Adrenal gland (tissue), 19 donors: ENCODE measurements at regions of chr6 and their contacts with region 1.

Region 1: DNA sequence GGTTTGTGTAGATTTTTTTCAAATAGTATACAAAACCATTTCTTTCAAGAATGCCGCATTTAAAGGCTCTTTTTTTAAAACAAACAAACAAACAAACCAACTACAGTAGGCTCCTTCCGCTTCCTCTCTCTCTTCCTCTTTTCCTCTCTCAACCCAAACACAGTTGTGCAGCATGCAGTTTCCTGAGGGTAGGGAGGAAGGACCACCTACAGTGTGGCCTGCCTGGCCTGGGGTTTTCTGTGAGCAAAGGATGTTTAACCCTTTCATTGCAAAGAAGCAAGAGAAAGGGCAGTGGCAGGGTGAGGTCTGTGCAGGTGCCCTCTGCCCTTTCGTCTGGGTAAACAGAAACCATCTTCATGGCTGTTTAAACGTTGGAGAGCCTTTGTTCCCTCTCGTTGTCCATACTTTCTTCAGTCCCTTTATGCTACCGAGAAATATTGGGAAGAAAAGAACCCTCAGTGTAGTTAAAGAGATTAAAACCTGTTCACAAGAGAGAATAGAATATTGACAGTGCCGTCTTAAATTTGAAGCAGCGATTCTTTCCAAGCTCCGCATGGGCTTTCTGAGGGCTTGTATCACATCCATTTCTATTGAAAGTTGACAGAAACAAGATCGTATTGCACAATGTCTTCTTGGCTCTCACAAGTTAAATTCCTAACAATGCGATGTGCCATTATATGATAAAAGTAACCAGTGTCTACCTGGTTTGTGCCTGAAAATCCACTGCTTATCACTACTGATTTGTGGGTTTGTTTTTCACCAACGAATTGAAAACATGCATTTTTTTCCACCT is 215.5 kb upstream of the SNX9 start:
- DNase-seq: no peak
- H3K4me3 ChIP-seq: no peak overlapping the region
- H3K27ac ChIP-seq: no peak overlapping the region
- H3K4me1 ChIP-seq: no peaks in the 10 kb centered on the region
- H3K27me3 ChIP-seq: no peaks in the 10 kb centered on the region
- CTCF ChIP-seq: no peak
- POLR2A ChIP-seq: no peak

Region 2: DNA sequence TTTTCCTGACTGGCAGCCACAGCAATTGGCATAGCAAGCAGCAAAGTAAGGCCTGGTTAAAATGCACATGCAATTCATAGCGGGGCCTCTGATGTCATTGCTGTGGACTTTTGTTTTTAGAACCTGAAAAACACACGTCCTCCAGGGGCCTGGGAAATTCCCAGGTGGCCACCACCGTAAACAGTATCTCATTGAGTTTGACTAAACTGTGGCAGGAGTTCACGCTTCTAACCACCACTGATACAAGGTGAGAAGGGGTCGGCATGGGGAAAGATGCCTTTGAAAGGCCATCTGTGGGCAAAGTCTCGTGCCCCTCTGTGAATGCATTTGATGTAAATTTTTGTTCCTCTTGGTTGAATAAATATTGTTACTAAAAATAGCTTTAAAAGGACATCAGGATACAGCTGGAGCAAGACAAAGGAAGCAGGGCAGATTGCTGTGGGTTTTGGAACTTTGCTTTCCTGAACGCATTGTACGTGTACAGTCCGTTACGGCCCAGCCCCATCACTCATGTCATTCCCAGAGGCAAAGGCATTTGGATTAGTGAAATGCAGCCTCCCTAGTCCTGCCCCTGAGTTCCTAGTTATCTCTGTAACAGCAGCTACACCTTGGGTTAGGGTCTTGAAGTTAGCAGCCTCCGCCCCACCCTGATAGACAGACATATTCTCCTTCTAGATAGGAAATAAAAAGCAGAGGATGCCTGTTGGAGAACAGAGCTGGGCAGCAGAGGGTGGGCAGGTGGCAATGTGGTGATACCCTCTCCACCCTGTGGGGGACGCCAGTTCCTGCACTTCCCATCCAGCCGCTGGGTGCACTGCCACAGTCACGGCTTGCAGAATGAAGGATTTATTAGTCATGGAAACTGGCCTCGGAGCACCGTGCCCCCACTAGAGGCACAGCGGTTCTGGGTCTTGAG is 146.3 kb before region 1 on chr6:
- intact Hi-C with region 1: no loop called
- DNase-seq: peak in 2 of 7 donors; percentile 12 to 30
- H3K4me3 ChIP-seq: no peak overlapping the region
- H3K27ac ChIP-seq: peak overlapping the region in 2 of 5 donors; percentile 3 to 68
- H3K4me1 ChIP-seq: no peaks in the 10 kb centered on the region
- H3K27me3 ChIP-seq: no peaks in the 10 kb centered on the region
- CTCF ChIP-seq: no peak
- POLR2A ChIP-seq: no peak

Region 3: GRCh38 chr6:157527471-157527907 is 80.0 kb before region 1 on chr6:
- intact Hi-C with region 1: no loop called
- DNase-seq: peak in 4 of 7 donors; percentile 15 to 56 (median 41)
- H3K4me3 ChIP-seq: no peak overlapping the region
- H3K27ac ChIP-seq: peak overlapping the region in 2 of 5 donors; percentile 27 to 38
- H3K4me1 ChIP-seq: peaks cover 3 to 5% of the 10 kb centered on the region in 2 donors
- H3K27me3 ChIP-seq: no peaks in the 10 kb centered on the region
- CTCF ChIP-seq: no peak
- POLR2A ChIP-seq: no peak

Region 4: DNA sequence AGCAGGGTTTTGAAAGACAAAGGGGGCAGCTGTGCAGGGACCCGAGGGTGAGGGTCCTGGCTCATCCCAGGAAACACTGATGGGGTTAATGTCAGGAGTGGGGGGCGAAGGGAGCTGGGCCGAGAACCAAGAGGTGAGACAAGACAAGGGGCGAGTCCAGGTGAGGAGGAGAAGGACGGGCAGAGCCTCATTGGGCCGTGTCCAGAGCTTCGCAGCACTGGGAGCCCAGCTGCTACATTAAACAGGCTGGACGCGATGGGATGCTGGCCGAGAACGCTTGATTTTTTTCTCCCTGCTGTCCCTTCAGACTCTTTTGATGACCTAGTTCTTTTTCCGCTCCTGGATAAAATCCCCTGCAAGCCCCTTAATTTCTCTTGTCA is 42.7 kb after region 1 on chr6:
- intact Hi-C with region 1: loop called in 1 of 2 experiments (anchors 10 kb)
- DNase-seq: peak in 3 of 7 donors; percentile 22 to 31 (median 30)
- H3K4me3 ChIP-seq: no peak overlapping the region
- H3K27ac ChIP-seq: no peak overlapping the region
- H3K4me1 ChIP-seq: peaks cover 0 to 9% of the 10 kb centered on the region in 2 donors
- H3K27me3 ChIP-seq: no peaks in the 10 kb centered on the region
- CTCF ChIP-seq: no peak
- POLR2A ChIP-seq: no peak

Region 5: GRCh38 chr6:157726892-157727628 is 119.5 kb after region 1 on chr6:
- intact Hi-C with region 1: no loop called
- DNase-seq: peak in 6 of 7 donors; percentile 34 to 79 (median 46)
- H3K4me3 ChIP-seq: no peak overlapping the region
- H3K27ac ChIP-seq: peak overlapping the region in 2 of 5 donors; percentile 62 to 74
- H3K4me1 ChIP-seq: peaks cover 0 to 3% of the 10 kb centered on the region in 2 donors
- H3K27me3 ChIP-seq: no peaks in the 10 kb centered on the region
- CTCF ChIP-seq: no peak
- POLR2A ChIP-seq: no peak